Common myeloid progenitor, CD34-positive (primary cell): ENCODE measurements at regions of chr17 and their contacts with region 1.

Region 1: GRCh38 chr17:48084932-48085444 is 16.3 kb downstream of the CBX1 start:
- DNase-seq: no peak
- H3K4me3 ChIP-seq: no peak overlapping the region
- H3K27ac ChIP-seq: no peak overlapping the region
- H3K4me1 ChIP-seq: no peaks in the 10 kb centered on the region
- H3K27me3 ChIP-seq: no peaks in the 10 kb centered on the region

Region 2: DNA sequence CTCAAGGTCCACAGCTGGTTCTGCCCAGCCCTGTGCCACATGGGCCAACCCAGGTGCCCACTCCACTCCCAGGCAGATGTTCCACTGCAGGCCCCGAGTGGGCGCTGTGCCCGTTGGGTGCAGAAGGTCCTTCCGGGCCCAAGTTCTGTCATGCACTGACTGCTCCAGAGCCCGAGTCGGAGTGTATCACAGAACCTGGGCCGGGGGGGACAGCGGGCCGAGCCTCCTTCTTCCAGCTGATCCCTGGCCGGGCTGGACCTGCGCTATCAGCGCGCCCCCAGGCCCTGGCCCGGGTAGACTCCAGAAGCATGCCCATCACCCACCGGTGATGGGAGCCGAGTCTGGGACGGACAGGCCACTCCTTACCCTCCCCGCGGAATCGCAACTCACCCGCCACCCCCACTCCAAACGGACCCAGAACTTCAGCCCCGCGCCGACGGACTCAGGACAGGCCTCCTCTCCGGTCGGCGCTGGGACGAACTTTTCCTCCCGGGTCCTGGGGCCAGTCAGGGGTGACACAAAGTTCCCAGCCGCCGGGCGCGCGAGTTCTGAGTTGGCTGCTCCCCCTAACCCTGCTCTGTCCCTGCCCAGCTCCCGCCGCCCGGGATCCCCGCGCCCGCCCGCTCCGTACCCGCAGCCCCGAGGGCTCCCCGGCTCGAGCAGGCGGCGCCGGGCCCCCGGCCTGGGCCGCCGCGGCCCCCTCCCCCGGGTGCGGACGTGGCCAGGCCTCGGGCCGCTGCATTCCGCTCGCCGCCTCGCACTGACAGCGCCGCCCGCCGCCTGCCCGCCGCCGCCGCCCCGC is 47.8 kb before region 1 on chr17 and contains the start of gene COPZ2:
- CTCF ChIA-PET with region 1: interaction called, 188 read pairs
- POLR2A ChIA-PET with region 1: no interaction called
- DNase-seq: peak; percentile 51 to 75 (median 74)
- H3K4me3 ChIP-seq: peak within 1 kb of the TSS; percentile 29 to 84 (median 60)
- H3K27ac ChIP-seq: no peak within 1 kb of the TSS
- H3K4me1 ChIP-seq: peaks cover 0 to 13% (median 11%) of the 10 kb centered on the region in 4 experiments
- H3K27me3 ChIP-seq: peaks cover 4 to 41% (median 12%) of the 10 kb centered on the region in 5 experiments

Region 3: GRCh38 chr17:48068491-48068961 is 16.5 kb before region 1 on chr17:
- CTCF ChIA-PET with region 1: interaction called, 37 read pairs
- POLR2A ChIA-PET with region 1: no interaction called
- DNase-seq: peak; percentile 23 to 36 (median 33)
- H3K4me3 ChIP-seq: no peak overlapping the region
- H3K27ac ChIP-seq: no peak overlapping the region
- H3K4me1 ChIP-seq: no peaks in the 10 kb centered on the region
- H3K27me3 ChIP-seq: no peaks in the 10 kb centered on the region

Region 4: GRCh38 chr17:48100160-48100559 is 15.2 kb after region 1 on chr17:
- CTCF ChIA-PET with region 1: interaction called, 87 read pairs
- POLR2A ChIA-PET with region 1: no interaction called
- DNase-seq: no peak
- H3K4me3 ChIP-seq: peak overlapping the region in 6 of 7 experiments; percentile 67 to 86 (median 78)
- H3K27ac ChIP-seq: peak overlapping the region in 1 of 2 experiments; percentile 43
- H3K4me1 ChIP-seq: peaks cover 9 to 27% (median 23%) of the 10 kb centered on the region in 4 experiments
- H3K27me3 ChIP-seq: no peaks in the 10 kb centered on the region